ENCODE measurements at regions of chr17 and their contacts with region 1.

Region 1: DNA sequence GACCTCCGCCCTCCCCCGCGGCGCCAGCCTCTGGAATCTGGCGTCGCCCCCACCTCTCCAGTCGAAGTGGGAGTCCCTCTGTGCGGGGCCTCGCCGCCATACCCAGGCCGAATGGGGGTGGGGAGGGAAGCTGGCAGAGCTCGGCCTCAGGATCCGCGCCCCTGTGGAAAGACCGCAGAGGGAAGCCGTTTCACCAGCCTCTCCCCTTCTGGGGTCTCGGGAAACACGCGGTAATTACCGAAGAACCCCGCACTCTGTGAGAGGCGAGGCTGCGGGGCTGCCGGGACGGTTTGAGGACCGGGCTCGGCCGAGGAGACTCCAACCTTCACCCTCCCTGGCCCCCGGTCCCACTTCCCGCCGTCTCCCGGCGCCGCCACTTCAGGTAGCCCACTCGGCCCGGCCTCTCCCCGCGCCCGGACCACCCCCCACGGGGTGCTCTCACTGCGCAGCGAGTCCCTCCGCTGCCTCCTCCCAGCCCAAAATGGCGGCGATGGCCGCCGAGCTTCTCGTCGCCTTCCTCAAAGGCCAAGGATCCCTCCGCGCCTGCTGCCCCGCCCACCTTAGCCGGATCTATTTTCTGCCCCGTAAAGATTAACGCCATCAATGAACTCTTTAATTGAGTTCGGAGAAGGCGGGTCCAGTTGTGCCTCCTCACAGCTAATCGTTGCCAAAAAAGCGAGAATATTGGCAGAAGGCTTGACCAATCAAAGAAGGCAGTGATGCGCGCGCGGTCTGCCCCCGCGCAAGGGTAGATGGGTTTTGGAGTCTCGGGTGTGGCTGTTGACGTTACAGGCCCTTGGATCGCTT is 453 bp upstream of the HEXIM2 start:
- DNase-seq: peak; percentile 99
- ATAC-seq: peak; percentile 96
- H3K4me3 Mint-ChIP-seq: peak overlapping the region; percentile 98
- H3K27ac Mint-ChIP-seq: peak overlapping the region; percentile 99
- H3K4me1 Mint-ChIP-seq: peaks cover 41% of the 10 kb centered on the region
- H3K27me3 Mint-ChIP-seq: no peaks in the 10 kb centered on the region

Region 2: GRCh38 chr17:45172454-45173286 is 11.4 kb after region 1 on chr17:
- CTCF ChIA-PET with region 1: interaction called, 20 read pairs
- DNase-seq: peak; percentile 62
- ATAC-seq: peak; percentile 68
- H3K4me3 Mint-ChIP-seq: peak overlapping the region; percentile 48
- H3K27ac Mint-ChIP-seq: peak overlapping the region; percentile 89
- H3K4me1 Mint-ChIP-seq: peaks cover 21% of the 10 kb centered on the region
- H3K27me3 Mint-ChIP-seq: no peaks in the 10 kb centered on the region

Measured in activated CD8-positive, alpha-beta memory T cell treated with anti-CD3 and anti-CD28 coated beads, Interleukin-2, amount 10 ng/mL, durations not matched to agents 7 days and 5 days (primary cell).